AG04450 (cell line): ENCODE measurements at regions of chr16 and their contacts with region 1.

Region 1: GRCh38 chr16:15757077-15757386 is 99.8 kb downstream of the MYH11 start:
- DNase-seq: no peak
- H3K4me3 ChIP-seq: no peak overlapping the region
- H3K27ac ChIP-seq: no peak overlapping the region
- H3K27me3 ChIP-seq: no peaks in the 10 kb centered on the region
- CTCF ChIP-seq: no peak

Region 2: DNA sequence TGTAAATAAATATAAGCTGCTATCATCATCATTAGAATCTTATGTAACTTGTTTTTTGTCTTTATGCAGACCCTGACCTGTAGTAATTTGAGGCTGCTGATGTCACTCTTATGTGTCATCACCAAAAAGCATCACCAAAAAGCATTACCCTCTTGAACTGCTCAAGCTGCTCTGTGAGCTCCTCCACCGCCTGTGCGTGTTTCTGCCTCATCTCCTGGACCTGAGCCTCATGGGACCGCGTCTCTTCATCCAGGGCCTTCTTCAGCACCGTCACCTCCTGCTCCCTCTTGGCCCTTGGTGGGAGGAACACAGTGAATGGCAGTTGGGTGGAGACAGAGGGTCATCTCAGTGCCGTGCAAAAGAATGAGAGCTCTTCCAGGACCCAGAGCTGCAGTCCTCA is 24.6 kb before region 1 on chr16:
- CTCF ChIA-PET with region 1: interaction called, 16 read pairs
- POLR2A ChIA-PET with region 1: no interaction called
- DNase-seq: no peak
- H3K4me3 ChIP-seq: no peak overlapping the region
- H3K27ac ChIP-seq: no peak overlapping the region
- H3K27me3 ChIP-seq: peaks cover 4% of the 10 kb centered on the region
- CTCF ChIP-seq: no peak

Region 3: DNA sequence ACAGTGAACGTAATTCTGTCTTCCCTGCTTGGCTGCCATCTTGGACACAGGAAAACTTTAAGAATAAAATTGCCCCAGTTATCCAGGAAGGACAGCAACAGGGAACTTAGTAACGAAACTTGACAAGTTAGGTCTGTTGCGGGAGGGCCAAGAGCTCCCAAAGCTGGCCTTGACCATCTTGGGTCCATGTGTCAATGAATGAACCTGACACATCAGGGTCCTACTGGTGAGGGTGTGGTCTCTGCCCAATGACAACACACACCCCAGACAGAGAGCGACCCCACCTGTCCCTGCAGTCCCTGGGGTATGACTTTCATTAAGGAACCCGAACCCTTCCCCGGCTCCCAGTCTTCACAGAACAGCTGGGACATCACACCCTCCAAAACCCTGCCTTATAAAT is 10.7 kb before region 1 on chr16:
- CTCF ChIA-PET with region 1: interaction called, 10 read pairs
- POLR2A ChIA-PET with region 1: no interaction called
- DNase-seq: no peak
- H3K4me3 ChIP-seq: no peak overlapping the region
- H3K27ac ChIP-seq: no peak overlapping the region
- H3K27me3 ChIP-seq: no peaks in the 10 kb centered on the region
- CTCF ChIP-seq: no peak

Region 4: GRCh38 chr16:15811481-15812400 is 54.7 kb after region 1 on chr16:
- CTCF ChIA-PET with region 1: interaction called, 11 read pairs
- POLR2A ChIA-PET with region 1: no interaction called
- DNase-seq: peak; percentile 77
- H3K4me3 ChIP-seq: no peak overlapping the region
- H3K27ac ChIP-seq: no peak overlapping the region
- H3K27me3 ChIP-seq: peaks cover 18% of the 10 kb centered on the region
- CTCF ChIP-seq: peak; percentile 25; the same call in 1 of the 2 replicates

Region 5: GRCh38 chr16:15855704-15856003 is 98.6 kb after region 1 on chr16:
- CTCF ChIA-PET with region 1: no interaction called
- POLR2A ChIA-PET with region 1: no interaction called
- DNase-seq: no peak
- H3K4me3 ChIP-seq: no peak overlapping the region
- H3K27ac ChIP-seq: no peak overlapping the region
- H3K27me3 ChIP-seq: peaks cover 45% of the 10 kb centered on the region
- CTCF ChIP-seq: no peak